Aorta (tissue), 5 donors: ENCODE measurements at regions of chr16 and their contacts with region 1.

Region 1: DNA sequence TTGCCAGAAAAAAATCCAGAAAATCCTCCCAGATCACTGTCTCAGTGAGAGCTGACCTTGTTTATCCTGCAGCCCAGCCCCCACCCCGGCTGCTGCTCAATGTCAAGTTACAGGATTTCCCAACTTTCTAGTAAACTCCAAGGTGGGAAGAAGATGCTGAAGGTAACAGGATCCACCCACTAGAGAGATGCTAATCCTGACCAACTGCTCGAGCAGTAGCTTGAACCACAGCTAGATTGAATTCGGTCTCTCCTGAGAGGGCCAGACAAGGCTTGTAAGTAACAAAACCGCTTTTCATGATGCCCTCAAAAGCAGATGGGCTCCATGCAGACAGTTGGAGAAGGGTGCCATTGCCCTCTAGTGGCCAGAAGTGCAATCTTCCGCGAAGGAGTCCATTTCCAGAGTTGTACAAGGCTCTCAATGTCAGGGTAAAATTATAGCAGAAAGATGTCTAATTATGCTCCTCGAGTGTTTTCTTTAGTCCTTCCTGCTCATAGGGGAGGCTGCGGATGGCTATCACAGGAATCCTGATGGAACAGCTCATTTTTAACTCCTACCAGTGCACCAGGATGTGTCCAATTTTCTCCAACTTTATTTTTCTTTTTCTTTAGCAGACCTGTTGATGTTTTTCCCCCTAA is 3.9 kb downstream of the CDH11 start:
- DNase-seq: peak; percentile 66 to 79
- ATAC-seq: peak; percentile 63
- H3K4me3 ChIP-seq: no peak overlapping the region
- H3K27ac ChIP-seq: no peak overlapping the region
- H3K4me1 ChIP-seq: peaks cover 5 to 9% of the 10 kb centered on the region in 2 donors
- H3K27me3 ChIP-seq: no peaks in the 10 kb centered on the region

Region 2: GRCh38 chr16:64089697-64090096 is 1028.2 kb before region 1 on chr16:
- intact Hi-C with region 1: loop called in 1 of 2 experiments (anchors 5 kb)
- DNase-seq: no peak
- ATAC-seq: no peak
- H3K4me3 ChIP-seq: no peak overlapping the region
- H3K27ac ChIP-seq: no peak overlapping the region
- H3K4me1 ChIP-seq: no peaks in the 10 kb centered on the region
- H3K27me3 ChIP-seq: no peaks in the 10 kb centered on the region

Region 3: DNA sequence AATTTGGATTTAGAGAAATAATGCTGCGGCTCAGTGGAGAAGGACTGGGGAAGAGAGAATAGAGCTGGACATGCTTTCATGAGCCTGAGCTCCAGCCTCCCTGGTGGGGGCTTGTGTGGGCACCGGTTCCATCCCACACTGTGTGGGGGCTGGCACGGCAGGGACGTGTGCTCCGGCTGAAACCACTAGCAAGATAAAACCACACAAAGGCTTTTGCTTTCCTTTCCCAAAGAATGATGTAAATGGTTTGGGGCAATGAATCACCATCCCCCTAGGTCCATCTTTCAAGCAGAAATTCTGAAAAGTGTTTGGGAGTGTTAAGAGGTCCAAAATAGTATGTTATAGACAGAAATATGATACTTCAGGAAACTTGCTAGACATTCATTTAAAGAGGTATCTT is 73.1 kb before region 1 on chr16:
- intact Hi-C with region 1: no loop called
- DNase-seq: no peak
- ATAC-seq: no peak
- H3K4me3 ChIP-seq: no peak overlapping the region
- H3K27ac ChIP-seq: no peak overlapping the region
- H3K4me1 ChIP-seq: peaks cover 3% of the 10 kb centered on the region in 2 donors
- H3K27me3 ChIP-seq: no peaks in the 10 kb centered on the region

Region 4: DNA sequence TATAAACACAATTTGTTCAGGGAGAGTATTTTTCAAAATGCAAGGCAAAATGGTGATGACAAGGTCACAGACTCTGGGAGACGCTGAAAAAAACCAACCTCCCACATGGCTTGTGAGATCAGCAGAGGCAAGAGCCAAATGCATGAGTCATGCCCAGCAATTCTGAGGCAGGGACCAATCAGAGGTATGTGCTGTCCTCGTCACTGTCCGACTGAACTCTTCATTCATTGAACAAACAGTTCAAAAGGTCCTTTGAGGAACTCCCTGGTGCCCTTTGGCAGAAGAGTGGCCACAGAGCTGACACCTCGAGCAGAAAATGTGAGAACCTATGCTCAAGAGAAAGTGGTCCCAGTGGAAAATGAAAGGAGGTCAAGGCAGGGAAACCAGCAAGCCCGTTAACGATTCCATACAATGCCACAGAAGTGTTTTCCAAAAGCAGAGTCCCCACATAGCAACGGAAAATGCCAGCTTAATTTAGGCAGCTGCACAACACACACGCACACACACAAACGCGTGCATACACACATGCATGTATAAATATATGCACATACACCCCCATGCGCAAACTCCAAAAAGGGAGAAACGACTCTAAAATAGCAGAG is 47.0 kb before region 1 on chr16:
- intact Hi-C with region 1: loop called (anchors 2 to 5 kb)
- DNase-seq: peak; percentile 62 to 81
- ATAC-seq: peak; percentile 88
- H3K4me3 ChIP-seq: peak overlapping the region; percentile 18 to 47
- H3K27ac ChIP-seq: peak overlapping the region; percentile 38 to 87
- H3K4me1 ChIP-seq: peaks cover 9 to 10% of the 10 kb centered on the region in 2 donors
- H3K27me3 ChIP-seq: no peaks in the 10 kb centered on the region

Region 5: DNA sequence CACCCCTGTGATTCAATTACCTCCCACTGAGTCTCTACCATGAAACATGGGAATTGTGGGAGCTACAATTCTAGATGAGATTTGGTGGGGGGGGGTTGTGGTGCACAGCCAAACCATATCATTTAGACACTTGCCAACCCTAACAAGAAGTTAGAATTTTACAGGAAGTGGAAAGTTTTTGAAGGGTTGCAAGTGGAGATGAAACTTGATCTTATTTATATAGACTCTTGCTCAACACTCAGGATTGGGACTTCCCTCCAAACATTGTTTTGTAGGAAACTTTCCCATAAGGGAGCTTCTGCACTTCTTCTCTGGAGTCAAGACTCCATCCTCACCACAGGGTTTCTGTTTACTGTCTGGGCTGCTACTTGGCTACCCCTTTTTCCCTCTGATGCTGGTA is 270.7 kb after region 1 on chr16:
- intact Hi-C with region 1: loop called in 1 of 2 experiments (anchors 10 kb)
- DNase-seq: no peak
- ATAC-seq: no peak
- H3K4me3 ChIP-seq: no peak overlapping the region
- H3K27ac ChIP-seq: no peak overlapping the region
- H3K4me1 ChIP-seq: peaks cover 0 to 5% of the 10 kb centered on the region in 2 donors
- H3K27me3 ChIP-seq: no peaks in the 10 kb centered on the region

Region 6: GRCh38 chr16:66270333-66270927 is 1152.5 kb after region 1 on chr16:
- intact Hi-C with region 1: loop called in 1 of 2 experiments (anchors 2 kb)
- DNase-seq: peak; percentile 78 to 93
- ATAC-seq: peak; percentile 87
- H3K4me3 ChIP-seq: peak overlapping the region; percentile 14 to 37
- H3K27ac ChIP-seq: no peak overlapping the region
- H3K4me1 ChIP-seq: no peaks in the 10 kb centered on the region
- H3K27me3 ChIP-seq: no peaks in the 10 kb centered on the region